ENCODE measurements at regions of chr1 and their contacts with region 1.

Region 1: DNA sequence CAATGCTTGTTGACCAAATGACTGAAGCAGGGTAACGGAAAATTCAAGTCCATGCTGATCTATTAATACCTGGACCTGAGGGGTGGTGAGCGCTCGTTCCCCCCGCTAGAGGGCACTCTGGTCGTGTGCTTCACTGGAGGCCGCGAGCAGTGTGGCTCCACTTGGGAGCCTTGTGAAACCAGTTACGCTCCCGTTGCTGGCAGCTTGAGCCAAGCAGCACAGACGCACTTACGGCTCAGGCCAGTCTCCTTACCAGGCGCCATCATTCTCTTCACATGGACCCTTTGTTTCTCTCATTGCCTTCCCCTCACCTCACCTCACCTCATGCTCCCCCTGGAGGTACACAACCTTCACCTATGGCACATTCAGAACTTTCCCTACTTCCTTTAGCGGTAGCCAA is 49.7 kb upstream of the TSPAN2 start:
- DNase-seq: peak; percentile 84 to 94 (median 89)
- ATAC-seq: peak; percentile 89 to 96 (median 92)
- H3K4me3 ChIP-seq: no peak overlapping the region
- H3K27ac ChIP-seq: peak overlapping the region in 6 of 12 donors; percentile 18 to 60 (median 30)
- H3K4me1 ChIP-seq: peaks cover 0 to 38% (median 13%) of the 10 kb centered on the region in 12 donors
- H3K27me3 ChIP-seq: no peaks in the 10 kb centered on the region
- CTCF ChIP-seq: peak; percentile 81 to 93 (median 88)
- POLR2A ChIP-seq: no peak

Region 2: DNA sequence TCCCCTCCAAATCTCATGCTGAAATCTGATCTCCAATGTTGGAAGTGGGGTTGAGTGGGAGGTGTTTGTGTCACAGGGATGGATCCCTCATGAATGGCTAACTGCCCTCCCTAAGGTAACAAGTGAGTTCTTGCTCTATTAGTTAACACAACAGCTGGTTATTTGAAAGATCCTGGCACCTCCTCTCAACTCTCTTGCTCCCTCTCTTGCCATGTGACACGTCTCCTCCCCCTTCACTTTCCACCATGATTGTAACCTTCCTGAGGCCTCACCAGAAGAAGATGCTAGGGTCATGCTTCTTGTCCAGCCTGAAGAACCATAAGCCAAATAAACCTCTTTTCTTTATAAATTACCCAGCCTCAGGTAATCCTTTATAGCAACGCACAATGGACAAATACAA is 497.6 kb before region 1 on chr1:
- intact Hi-C with region 1: no loop called
- DNase-seq: no peak
- ATAC-seq: no peak
- H3K4me3 ChIP-seq: no peak overlapping the region
- H3K27ac ChIP-seq: no peak overlapping the region
- H3K4me1 ChIP-seq: peaks cover 0 to 3% (median 0%) of the 10 kb centered on the region in 12 donors
- H3K27me3 ChIP-seq: no peaks in the 10 kb centered on the region
- CTCF ChIP-seq: no peak
- POLR2A ChIP-seq: no peak

Region 3: DNA sequence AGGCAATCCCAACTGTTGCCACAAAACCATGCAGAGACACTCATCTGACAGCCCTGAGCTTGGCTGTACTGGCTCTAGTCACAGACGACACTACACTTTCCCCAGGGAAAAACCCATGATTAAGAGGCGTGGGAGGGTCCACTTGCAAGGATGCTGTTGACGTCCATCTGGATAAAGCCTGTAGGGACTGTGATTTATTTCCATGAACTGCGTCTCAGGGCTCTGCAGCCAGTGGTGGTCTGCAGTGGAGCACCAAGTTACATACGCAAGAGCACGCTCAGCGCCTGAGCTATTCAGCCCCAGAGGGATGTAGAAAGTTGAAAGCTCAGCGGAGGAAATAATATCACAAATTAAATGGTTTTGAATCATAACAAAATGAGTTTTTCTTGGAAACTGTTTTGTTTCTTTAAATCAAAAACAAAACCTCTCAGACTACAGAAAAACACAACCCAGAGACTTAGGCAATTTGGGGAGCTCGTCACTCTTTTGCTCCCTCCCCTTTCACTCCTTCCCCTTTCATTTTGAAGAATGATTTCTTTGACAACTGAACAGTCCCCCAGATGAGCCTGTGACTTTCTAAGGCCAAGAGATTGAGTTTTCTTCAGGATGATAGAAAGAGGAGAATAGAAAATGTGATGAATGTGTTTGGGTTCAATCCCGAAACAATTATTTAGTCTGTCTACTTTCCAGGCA is 127.9 kb after region 1 on chr1:
- intact Hi-C with region 1: loop called in 3 of 10 experiments (anchors 5 to 10 kb)
- DNase-seq: peak in 4 of 5 donors; percentile 59 to 75 (median 67)
- ATAC-seq: peak; percentile 75 to 91 (median 84)
- H3K4me3 ChIP-seq: peak overlapping the region in 1 of 12 donors; percentile 6
- H3K27ac ChIP-seq: peak overlapping the region in 10 of 12 donors; percentile 29 to 75 (median 66)
- H3K4me1 ChIP-seq: peaks cover 0 to 12% (median 0%) of the 10 kb centered on the region in 12 donors
- H3K27me3 ChIP-seq: no peaks in the 10 kb centered on the region
- CTCF ChIP-seq: no peak
- POLR2A ChIP-seq: no peak

Region 4: GRCh38 chr1:115282807-115283208 is 143.8 kb after region 1 on chr1:
- intact Hi-C with region 1: loop called in 2 of 10 experiments (anchors 5 to 10 kb)
- DNase-seq: peak; percentile 80 to 89 (median 83)
- ATAC-seq: peak; percentile 82 to 96 (median 93)
- H3K4me3 ChIP-seq: peak overlapping the region in 5 of 12 donors; percentile 5 to 42 (median 23)
- H3K27ac ChIP-seq: peak overlapping the region; percentile 55 to 89 (median 82)
- H3K4me1 ChIP-seq: peaks cover 0 to 35% (median 14%) of the 10 kb centered on the region in 12 donors
- H3K27me3 ChIP-seq: no peaks in the 10 kb centered on the region
- CTCF ChIP-seq: no peak
- POLR2A ChIP-seq: no peak

Region 5: DNA sequence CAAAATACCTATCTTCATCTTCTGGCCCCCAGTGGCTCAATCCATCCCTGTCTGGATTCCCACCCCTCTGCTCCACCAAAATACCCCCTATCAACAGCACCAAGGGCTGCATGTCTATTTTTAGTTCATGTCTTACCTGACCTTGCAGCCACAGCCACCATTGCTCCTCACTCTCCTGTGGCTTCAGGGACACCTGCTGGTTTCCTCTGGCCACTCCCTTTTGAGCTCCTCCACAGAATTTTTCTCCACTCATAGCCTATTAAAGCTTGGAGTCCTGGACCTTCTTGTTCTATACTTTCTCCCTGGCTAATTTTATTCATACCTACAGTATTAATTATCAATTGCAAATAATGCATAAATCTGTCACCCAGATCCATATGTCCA is 324.4 kb after region 1 on chr1:
- intact Hi-C with region 1: loop called (anchors 1 to 5 kb)
- DNase-seq: peak in 1 of 5 donors; percentile 48
- ATAC-seq: peak; percentile 53 to 80 (median 72)
- H3K4me3 ChIP-seq: no peak overlapping the region
- H3K27ac ChIP-seq: no peak overlapping the region
- H3K4me1 ChIP-seq: peaks cover 0 to 7% (median 0%) of the 10 kb centered on the region in 12 donors
- H3K27me3 ChIP-seq: no peaks in the 10 kb centered on the region
- CTCF ChIP-seq: peak in 10 of 12 donors; percentile 28 to 58 (median 49)
- POLR2A ChIP-seq: no peak

Region 6: GRCh38 chr1:115506926-115507589 is 368.1 kb after region 1 on chr1:
- intact Hi-C with region 1: loop called in 3 of 10 experiments (anchors 2 to 5 kb)
- DNase-seq: no peak
- ATAC-seq: peak in 3 of 4 donors; percentile 61 to 68 (median 67)
- H3K4me3 ChIP-seq: no peak overlapping the region
- H3K27ac ChIP-seq: no peak overlapping the region
- H3K4me1 ChIP-seq: peaks cover 0 to 7% (median 0%) of the 10 kb centered on the region in 12 donors
- H3K27me3 ChIP-seq: no peaks in the 10 kb centered on the region
- CTCF ChIP-seq: peak; percentile 11 to 60 (median 42)
- POLR2A ChIP-seq: no peak

Region 7: GRCh38 chr1:115764541-115764940 is 625.6 kb after region 1 on chr1:
- intact Hi-C with region 1: loop called in 1 of 10 experiments (anchors 10 kb)
- DNase-seq: peak in 1 of 5 donors; percentile 32
- ATAC-seq: no peak
- H3K4me3 ChIP-seq: peak overlapping the region in 7 of 12 donors; percentile 60 to 86 (median 64)
- H3K27ac ChIP-seq: peak overlapping the region in 6 of 12 donors; percentile 41 to 100 (median 92)
- H3K4me1 ChIP-seq: peaks cover 0 to 56% (median 10%) of the 10 kb centered on the region in 12 donors
- H3K27me3 ChIP-seq: no peaks in the 10 kb centered on the region
- CTCF ChIP-seq: peak in 10 of 12 donors; percentile 32 to 65 (median 45)
- POLR2A ChIP-seq: no peak

Measured in heart left ventricle (tissue), 16 donors.